ENCODE measurements at regions of chr13 and their contacts with region 1.

Region 1: DNA sequence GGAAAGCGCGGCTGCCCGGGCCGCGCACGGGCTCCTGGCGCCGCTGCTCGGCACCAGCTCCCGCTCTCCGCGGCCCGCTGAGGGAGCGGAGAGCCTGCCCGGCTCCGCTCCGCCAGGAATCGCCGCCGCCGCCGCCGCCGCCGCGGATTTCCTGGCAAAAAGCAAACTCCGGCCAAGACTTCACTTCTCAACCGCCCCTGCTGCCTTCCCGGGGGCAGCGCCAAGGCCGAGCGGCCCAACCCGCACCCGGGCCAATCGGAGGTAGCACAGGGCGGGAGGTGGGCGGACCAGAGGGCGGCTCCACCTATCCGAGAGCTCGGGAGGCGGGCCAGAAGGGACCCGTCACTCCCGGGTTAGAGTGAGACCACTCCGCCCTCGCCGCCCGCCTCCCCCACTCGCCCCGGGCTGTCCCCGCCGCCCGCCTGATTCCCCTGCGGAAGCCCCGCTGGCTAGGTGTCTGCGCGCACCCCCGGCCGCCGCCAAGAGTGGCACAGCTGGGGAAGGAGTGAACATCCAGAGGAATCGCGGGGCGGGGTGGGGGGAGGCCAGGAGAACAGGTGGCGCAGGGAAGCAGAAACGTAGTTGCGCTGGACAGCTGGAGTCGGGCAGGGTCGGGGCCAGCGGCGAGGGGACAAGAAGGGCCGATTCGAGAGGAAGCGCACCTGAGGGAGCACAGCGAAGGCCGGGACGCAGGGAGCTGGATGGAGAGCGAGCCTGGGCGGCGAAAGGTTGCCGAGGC is at the start of gene LNX2:
- DNase-seq: peak; percentile 95 to 99
- H3K4me3 ChIP-seq: peak within 1 kb of the TSS; percentile 72 to 95
- H3K27ac ChIP-seq: peak within 1 kb of the TSS; percentile 95 to 97
- H3K4me1 ChIP-seq: peaks cover 0 to 14% of the 10 kb centered on the region in 2 donors
- H3K27me3 ChIP-seq: no peaks in the 10 kb centered on the region
- CTCF ChIP-seq: no peak
- total RNA-seq, gene LNX2: 3.7 TPM

Region 2: DNA sequence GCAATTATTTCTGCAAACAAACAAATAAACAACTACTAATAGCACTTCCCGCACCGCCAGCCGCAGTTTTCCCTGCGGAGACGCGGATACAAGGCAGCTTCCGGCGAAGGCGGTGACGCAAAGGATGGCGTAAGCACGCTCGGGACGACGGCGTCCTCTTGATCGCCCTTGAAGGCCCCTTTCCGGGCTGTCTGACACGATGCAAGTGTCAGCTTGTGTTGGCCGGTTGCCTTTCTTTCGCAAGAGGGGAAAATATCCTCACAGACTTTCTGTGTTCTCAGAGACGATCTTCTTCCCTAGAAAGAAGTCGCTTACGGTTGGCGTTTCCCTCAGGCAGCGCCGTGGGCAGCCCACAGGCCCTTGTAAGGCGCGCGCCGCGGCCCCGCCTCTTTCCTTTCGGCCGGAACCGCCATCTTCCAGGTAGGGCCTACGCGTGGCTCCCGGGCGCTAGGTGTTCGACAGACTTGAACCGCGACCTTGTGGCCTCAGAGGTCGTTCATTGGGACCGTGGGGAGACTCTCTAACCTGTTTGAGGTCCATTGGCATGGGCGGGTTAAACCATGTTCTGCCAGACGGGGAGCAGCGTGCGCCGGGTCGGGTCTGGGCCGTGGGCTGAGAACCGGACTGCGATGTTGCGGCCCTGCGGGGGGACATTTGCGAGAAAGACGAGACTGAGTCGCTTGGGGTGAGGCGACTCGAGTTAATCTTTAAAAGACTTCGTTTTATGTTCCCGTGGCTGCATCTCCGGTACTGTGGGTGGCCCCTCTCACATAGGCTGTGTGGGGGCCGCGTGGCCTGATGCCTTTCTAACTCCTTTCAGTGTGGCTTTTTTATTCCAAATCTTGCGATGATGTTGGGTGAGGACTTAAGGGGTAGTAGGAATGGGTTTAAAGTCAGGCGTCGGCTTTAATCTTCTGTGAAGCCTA is 369.1 kb before region 1 on chr13 and contains the start of gene RPL21:
- intact Hi-C with region 1: loop called (anchors 5 kb)
- DNase-seq: peak; percentile 81 to 98
- H3K4me3 ChIP-seq: peak within 1 kb of the TSS; percentile 82 to 93
- H3K27ac ChIP-seq: peak within 1 kb of the TSS; percentile 91 to 97
- H3K4me1 ChIP-seq: peaks cover 5 to 17% of the 10 kb centered on the region in 2 donors
- H3K27me3 ChIP-seq: no peaks in the 10 kb centered on the region
- CTCF ChIP-seq: no peak
- total RNA-seq, gene RPL21: 377 TPM

Region 3: GRCh38 chr13:27374650-27375049 is 245.9 kb before region 1 on chr13:
- intact Hi-C with region 1: loop called (anchors 10 kb)
- DNase-seq: peak in 1 of 2 donors; percentile 85
- H3K4me3 ChIP-seq: no peak overlapping the region
- H3K27ac ChIP-seq: no peak overlapping the region
- H3K4me1 ChIP-seq: no peaks in the 10 kb centered on the region
- H3K27me3 ChIP-seq: no peaks in the 10 kb centered on the region
- CTCF ChIP-seq: peak; percentile 39 to 75 (median 61)

Region 4: DNA sequence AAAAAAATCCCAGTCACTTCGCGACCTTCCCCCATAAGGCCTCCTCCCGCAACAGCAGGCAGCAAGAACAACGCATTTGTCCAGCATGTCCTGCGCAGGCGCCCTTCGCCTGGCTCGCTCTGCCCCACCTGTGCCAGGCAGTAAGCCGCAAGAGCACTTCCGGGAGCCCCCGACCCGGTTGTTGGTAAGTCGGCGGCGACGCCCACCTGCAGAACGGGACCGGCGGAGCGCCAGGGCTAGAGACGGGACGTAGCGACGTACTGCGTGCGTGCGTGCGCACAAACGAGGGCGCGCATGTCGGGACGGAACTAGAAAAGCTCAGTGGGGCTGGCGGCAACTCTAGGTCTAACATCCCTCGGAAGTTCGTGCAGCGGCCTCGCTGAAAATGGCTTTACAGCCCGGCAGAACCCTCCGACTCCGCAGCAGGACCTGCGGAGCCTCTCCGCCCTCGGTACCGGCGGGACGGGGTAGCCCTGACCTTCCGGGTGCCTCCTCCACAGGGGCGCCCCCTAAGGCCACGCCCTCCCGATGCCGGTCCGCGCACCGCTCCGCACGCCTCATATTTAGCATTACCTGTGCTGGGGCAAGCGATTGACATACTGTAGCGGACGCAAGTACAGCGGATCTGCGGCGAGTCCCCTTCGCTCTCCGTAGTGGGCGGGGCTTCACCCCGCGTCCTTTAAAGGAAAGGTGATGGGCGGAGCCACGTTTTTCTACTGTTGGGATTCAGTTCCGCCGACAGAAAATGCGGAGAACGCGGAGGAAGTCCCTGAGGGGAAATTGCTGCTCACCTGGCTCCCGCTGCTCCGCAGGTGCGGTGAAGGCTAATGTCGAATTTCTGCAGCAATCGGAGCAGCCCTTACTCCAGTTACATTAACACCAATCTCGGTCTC is 170.4 kb before region 1 on chr13 and contains the start of gene MTIF3:
- intact Hi-C with region 1: loop called (anchors 1 kb)
- DNase-seq: peak; percentile 79 to 96
- H3K4me3 ChIP-seq: peak within 1 kb of the TSS; percentile 93 to 99
- H3K27ac ChIP-seq: peak within 1 kb of the TSS; percentile 96 to 97
- H3K4me1 ChIP-seq: peaks cover 3 to 15% of the 10 kb centered on the region in 2 donors
- H3K27me3 ChIP-seq: no peaks in the 10 kb centered on the region
- CTCF ChIP-seq: peak in 2 of 3 experiments; percentile 2 to 8
- total RNA-seq, gene MTIF3: 23.6 TPM

Region 5: DNA sequence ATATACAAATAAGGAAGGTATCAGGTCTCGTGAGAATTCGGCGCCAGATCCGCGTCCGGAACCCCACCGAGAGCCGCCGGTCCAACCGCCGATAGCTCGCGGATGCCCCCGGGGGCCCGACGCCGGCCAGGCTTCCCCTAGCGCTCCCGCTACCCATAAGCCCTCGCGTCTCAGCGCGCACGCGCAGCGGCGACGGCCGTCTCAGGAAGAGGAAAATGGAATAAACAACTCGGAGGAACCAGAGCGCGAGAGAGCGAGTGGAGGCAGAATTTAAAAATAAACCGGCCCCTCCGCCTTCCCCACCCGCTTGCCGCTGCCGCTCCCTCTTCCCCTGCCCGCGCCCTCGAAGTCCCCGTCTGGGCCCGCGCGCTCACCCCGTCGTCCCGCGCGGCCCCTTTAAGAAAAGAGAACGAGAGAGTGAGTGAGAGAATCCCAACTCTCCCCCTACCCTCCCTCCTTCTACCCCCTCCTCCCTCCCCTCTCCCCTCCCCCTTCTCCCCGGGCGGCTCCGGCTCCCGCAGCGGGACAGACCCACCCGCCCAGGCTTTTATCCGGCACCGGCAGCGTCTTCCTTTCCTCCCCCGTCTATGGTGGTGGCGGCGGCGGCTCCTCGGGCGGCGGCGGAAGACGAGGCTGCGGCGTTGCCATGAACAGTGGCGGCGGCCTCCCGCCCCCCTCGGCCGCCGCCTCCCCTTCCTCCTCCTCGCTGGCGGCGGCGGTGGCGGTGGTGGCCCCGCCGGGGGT is 517.6 kb after region 1 on chr13 and contains the start of gene PAN3:
- intact Hi-C with region 1: loop called (anchors 5 kb)
- DNase-seq: peak; percentile 72 to 96
- H3K4me3 ChIP-seq: peak within 1 kb of the TSS; percentile 81 to 95
- H3K27ac ChIP-seq: peak within 1 kb of the TSS; percentile 90 to 100
- H3K4me1 ChIP-seq: peaks cover 0 to 16% of the 10 kb centered on the region in 2 donors
- H3K27me3 ChIP-seq: no peaks in the 10 kb centered on the region
- CTCF ChIP-seq: peak in 1 of 3 experiments; percentile 10
- total RNA-seq, gene PAN3: 34.5 TPM